ENCODE measurements at regions of chr19 and their contacts with region 1.

Region 1: GRCh38 chr19:48698046-48698445 is 2.3 kb downstream of the FUT2 start:
- DNase-seq: peak; percentile 61
- H3K4me3 ChIP-seq: no peak overlapping the region
- H3K27ac ChIP-seq: no peak overlapping the region
- H3K4me1 ChIP-seq: peaks cover 10% of the 10 kb centered on the region
- H3K27me3 ChIP-seq: no peaks in the 10 kb centered on the region
- CTCF ChIP-seq: no peak

Region 2: DNA sequence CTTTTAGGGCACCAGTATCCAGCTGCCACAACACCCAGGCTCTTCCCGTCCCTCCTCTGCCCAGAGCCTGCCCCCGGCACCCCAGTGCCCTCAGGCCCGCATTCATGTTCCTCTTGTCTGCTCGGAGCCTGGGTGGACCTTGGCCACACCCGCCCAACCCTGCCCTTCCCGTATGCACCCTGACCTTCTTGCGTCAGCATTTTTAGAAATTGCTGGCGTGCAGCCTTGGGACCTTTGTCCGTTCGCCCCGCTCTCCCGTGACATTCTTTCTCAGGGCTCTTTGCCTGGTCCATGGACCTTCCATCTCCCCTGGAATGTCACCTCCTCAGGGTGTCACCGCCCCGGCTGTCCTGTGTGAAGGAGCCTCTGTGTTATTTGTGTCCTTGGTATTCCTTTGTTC is 209.6 kb after region 1 on chr19:
- CTCF ChIA-PET with region 1: no interaction called
- POLR2A ChIA-PET with region 1: no interaction called
- intact Hi-C with region 1: no loop called
- DNase-seq: no peak
- H3K4me3 ChIP-seq: no peak overlapping the region
- H3K27ac ChIP-seq: no peak overlapping the region
- H3K4me1 ChIP-seq: no peaks in the 10 kb centered on the region
- H3K27me3 ChIP-seq: no peaks in the 10 kb centered on the region
- CTCF ChIP-seq: no peak

Region 3: DNA sequence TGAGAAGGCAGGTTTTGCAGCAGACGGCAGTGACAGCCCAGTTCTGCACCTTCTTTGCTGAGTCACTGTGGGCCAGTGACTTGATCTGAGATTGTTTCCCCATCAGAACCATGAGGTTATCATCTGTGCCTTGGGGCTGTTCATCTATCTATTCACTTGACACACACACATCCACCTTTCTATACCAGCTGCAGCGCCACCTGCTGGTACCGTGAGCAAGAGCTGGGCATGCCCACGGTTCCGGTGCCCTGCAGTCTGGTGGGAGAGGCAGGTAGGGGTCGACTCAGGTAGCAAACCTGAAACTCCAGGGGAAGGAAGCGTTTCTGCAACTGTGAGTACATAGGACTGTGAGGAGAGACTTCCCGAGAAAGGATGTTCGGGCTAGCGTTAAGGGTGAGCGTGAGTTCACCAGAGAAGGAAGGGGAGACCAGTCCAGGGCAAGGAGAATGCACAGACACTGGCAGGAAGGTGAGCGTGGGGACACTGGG is 408.6 kb after region 1 on chr19:
- CTCF ChIA-PET with region 1: interaction called, 14 read pairs
- POLR2A ChIA-PET with region 1: no interaction called
- intact Hi-C with region 1: no loop called
- DNase-seq: peak; percentile 78
- H3K4me3 ChIP-seq: no peak overlapping the region
- H3K27ac ChIP-seq: no peak overlapping the region
- H3K4me1 ChIP-seq: peaks cover 25% of the 10 kb centered on the region
- H3K27me3 ChIP-seq: no peaks in the 10 kb centered on the region
- CTCF ChIP-seq: peak; percentile 96

Measured in A673 (cell line).